ENCODE measurements at regions of chr16 and their contacts with region 1.

Region 1: GRCh38 chr16:87778830-87779579 is 13.2 kb upstream of the KLHDC4 start:
- DNase-seq: peak; percentile 79 to 95 (median 84)
- ATAC-seq: peak; percentile 85
- H3K4me3 ChIP-seq: no peak overlapping the region
- H3K27ac ChIP-seq: peak overlapping the region; percentile 89
- H3K4me1 ChIP-seq: peaks cover 39 to 48% of the 10 kb centered on the region in 2 experiments
- H3K27me3 ChIP-seq: no peaks in the 10 kb centered on the region
- CTCF ChIP-seq: peak; percentile 96 to 97 (median 97)
- EP300 ChIP-seq: peak; percentile 96
- POLR2A ChIP-seq: no peak
- RAD21 ChIP-seq: peak; percentile 100

Region 2: GRCh38 chr16:87806603-87807546 is 27.9 kb after region 1 on chr16:
- CTCF ChIA-PET with region 1: no interaction called
- POLR2A ChIA-PET with region 1: interaction called, 4 read pairs
- in situ Hi-C with region 1: no loop called
- intact Hi-C with region 1: loop called (anchors 2 kb)
- DNase-seq: peak; percentile 40 to 56 (median 51)
- ATAC-seq: peak; percentile 87
- H3K4me3 ChIP-seq: no peak overlapping the region
- H3K27ac ChIP-seq: peak overlapping the region; percentile 61; the same call in 2 of the 3 replicates
- H3K4me1 ChIP-seq: peaks cover 30 to 31% of the 10 kb centered on the region in 2 experiments
- H3K27me3 ChIP-seq: peaks cover 0 to 6% of the 10 kb centered on the region in 2 experiments; a peak in 1 of 5 replicates
- CTCF ChIP-seq: no peak
- EP300 ChIP-seq: peak; percentile 90
- POLR2A ChIP-seq: no peak
- RAD21 ChIP-seq: peak; percentile 22 to 27; a peak in 2 of 4 replicates

Region 3: GRCh38 chr16:87828071-87828971 is 49.3 kb after region 1 on chr16:
- CTCF ChIA-PET with region 1: no interaction called
- POLR2A ChIA-PET with region 1: interaction called, 18 read pairs
- in situ Hi-C with region 1: no loop called
- intact Hi-C with region 1: no loop called
- DNase-seq: no peak
- ATAC-seq: peak; percentile 25
- H3K4me3 ChIP-seq: no peak overlapping the region
- H3K27ac ChIP-seq: no peak overlapping the region
- H3K4me1 ChIP-seq: peaks cover 0 to 50% of the 10 kb centered on the region in 2 experiments; a peak in 2 of 5 replicates
- H3K27me3 ChIP-seq: peaks cover 14 to 23% of the 10 kb centered on the region in 2 experiments; a peak in 4 of 5 replicates
- CTCF ChIP-seq: no peak
- EP300 ChIP-seq: no peak
- POLR2A ChIP-seq: peak; percentile 19
- RAD21 ChIP-seq: no peak

Region 4: GRCh38 chr16:87853411-87854052 is 74.5 kb after region 1 on chr16:
- CTCF ChIA-PET with region 1: interaction called, 3 read pairs
- POLR2A ChIA-PET with region 1: interaction called, 3 read pairs
- in situ Hi-C with region 1: no loop called
- intact Hi-C with region 1: loop called (anchors 1 kb)
- DNase-seq: peak; percentile 89 to 93 (median 92)
- ATAC-seq: peak; percentile 73
- H3K4me3 ChIP-seq: peak overlapping the region; percentile 28
- H3K27ac ChIP-seq: peak overlapping the region; percentile 98
- H3K4me1 ChIP-seq: peaks cover 56 to 85% of the 10 kb centered on the region in 2 experiments
- H3K27me3 ChIP-seq: no peaks in the 10 kb centered on the region
- CTCF ChIP-seq: no peak
- EP300 ChIP-seq: peak; percentile 62
- POLR2A ChIP-seq: peak; percentile 56
- RAD21 ChIP-seq: peak in 1 of 2 experiments; percentile 19; a peak in 1 of 4 replicates

Region 5: DNA sequence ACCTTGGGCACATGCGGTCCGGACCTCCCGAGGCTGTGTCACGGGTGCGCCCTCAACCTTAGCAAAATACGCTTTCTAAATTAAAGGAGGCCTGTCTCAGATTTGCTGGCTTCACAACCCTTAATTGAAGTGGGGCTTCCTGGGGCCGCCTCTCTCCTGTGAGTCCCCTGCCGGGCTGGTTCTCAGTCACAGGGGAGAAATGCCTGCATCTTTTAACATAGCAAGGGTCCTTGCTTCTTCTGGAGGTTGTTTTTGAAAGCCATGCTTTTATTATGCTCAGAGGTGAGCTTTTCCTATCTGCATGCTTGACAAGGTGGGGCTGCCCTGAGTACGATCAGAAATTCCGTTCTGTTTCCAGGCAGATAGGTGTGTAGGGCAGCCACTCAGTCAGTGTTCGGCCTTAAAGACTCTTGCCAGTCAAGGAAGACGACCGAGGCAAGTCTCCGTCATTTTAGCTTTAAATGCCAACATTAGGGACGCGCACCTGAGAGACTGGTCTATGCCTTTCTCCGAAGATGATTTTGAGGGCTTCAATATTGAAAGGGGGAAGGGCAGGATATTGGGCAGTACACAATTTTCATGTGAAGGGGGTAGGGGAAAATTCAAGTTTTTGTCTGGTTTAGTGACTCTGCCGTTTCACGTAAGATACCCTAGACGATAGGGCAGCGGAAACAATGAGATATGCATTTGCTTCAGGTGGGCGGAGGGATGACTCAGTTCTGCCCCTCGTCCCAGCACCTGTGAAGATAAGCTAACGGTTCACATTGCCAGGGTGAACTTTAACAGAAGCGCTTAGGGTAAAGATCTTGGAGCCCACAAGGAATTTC is 95.8 kb after region 1 on chr16:
- CTCF ChIA-PET with region 1: interaction called, 31 read pairs
- POLR2A ChIA-PET with region 1: interaction called, 4 read pairs
- in situ Hi-C with region 1: loop called (anchors 5 kb)
- intact Hi-C with region 1: loop called (anchors 1 kb)
- DNase-seq: peak in 2 of 4 experiments; percentile 19 to 29
- ATAC-seq: no peak
- H3K4me3 ChIP-seq: no peak overlapping the region
- H3K27ac ChIP-seq: peak overlapping the region; percentile 35; the same call in 1 of the 3 replicates
- H3K4me1 ChIP-seq: peaks cover 16% of the 10 kb centered on the region in 2 experiments; a peak in 4 of 5 replicates
- H3K27me3 ChIP-seq: peaks cover 2 to 14% of the 10 kb centered on the region in 2 experiments; a peak in 3 of 5 replicates
- CTCF ChIP-seq: no peak
- EP300 ChIP-seq: peak; percentile 70; the same call in 1 of the 2 replicates
- POLR2A ChIP-seq: no peak
- RAD21 ChIP-seq: no peak

Region 6: GRCh38 chr16:87891764-87892163 is 112.8 kb after region 1 on chr16:
- CTCF ChIA-PET with region 1: no interaction called
- POLR2A ChIA-PET with region 1: no interaction called
- in situ Hi-C with region 1: no loop called
- intact Hi-C with region 1: no loop called
- DNase-seq: peak in 1 of 4 experiments; percentile 4
- ATAC-seq: peak; percentile 77
- H3K4me3 ChIP-seq: no peak overlapping the region
- H3K27ac ChIP-seq: no peak overlapping the region
- H3K4me1 ChIP-seq: peaks cover 5% of the 10 kb centered on the region in 2 experiments; a peak in 4 of 5 replicates
- H3K27me3 ChIP-seq: peaks cover 4 to 11% of the 10 kb centered on the region in 2 experiments; a peak in 3 of 5 replicates
- CTCF ChIP-seq: no peak
- EP300 ChIP-seq: no peak
- POLR2A ChIP-seq: no peak
- RAD21 ChIP-seq: no peak

Region 7: DNA sequence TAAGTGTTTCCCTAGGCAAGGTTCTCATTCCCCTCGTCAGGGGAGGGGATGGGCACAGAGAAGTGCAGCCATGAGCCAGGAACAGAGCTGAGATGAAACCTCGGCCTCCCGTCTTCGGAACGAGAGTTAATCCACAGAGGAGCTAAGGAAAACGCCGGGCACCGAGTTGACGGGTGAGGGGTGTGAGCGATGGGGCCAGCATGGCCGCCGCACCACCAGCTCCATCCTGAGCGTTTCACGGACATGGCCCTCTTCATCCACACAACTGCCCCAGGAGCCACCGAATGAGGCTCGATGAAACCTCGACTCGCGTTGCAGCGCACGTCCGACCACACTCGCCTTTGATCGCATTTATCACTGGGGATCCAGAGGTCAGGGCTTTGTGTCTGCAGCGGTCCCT is 135.8 kb after region 1 on chr16:
- CTCF ChIA-PET with region 1: interaction called, 24 read pairs
- POLR2A ChIA-PET with region 1: interaction called, 4 read pairs
- in situ Hi-C with region 1: no loop called
- intact Hi-C with region 1: no loop called
- DNase-seq: no peak
- ATAC-seq: no peak
- H3K4me3 ChIP-seq: no peak overlapping the region
- H3K27ac ChIP-seq: no peak overlapping the region
- H3K4me1 ChIP-seq: peaks cover 10 to 28% of the 10 kb centered on the region in 2 experiments; a peak in 4 of 5 replicates
- H3K27me3 ChIP-seq: peaks cover 2 to 22% of the 10 kb centered on the region in 2 experiments; a peak in 3 of 5 replicates
- CTCF ChIP-seq: no peak
- EP300 ChIP-seq: no peak
- POLR2A ChIP-seq: no peak
- RAD21 ChIP-seq: no peak